CD14-positive monocyte (primary cell): ENCODE measurements at regions of chr4 and their contacts with region 1.

Region 1: DNA sequence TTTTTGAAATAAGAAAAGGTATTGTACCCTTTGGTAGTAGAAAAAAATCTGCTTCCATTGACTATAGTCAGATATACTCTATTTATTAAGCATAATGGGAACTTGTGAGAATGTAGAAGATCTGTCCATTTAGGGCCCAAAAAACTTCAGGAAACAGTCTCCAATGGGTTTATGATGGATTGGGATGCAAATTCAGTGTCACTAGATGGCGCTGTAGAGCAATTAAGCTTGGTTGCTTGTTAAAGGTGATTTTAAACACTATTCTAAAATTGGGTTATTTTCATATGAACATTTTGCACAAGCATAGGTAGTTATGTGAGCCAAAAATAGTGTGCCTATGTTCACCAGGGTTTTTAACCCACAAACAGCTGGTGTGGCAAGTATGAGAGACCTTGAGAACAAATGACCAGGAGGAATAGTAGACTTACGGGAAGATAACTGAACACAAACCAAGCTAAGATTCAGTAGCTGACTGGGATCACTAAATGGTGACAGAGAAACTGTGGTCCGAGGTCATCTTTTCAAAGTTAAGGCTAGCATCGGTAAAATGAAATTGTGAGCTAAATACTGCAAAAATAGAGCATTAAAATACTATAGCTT is 80.3 kb upstream of the LSM6 start:
- DNase-seq: peak; percentile 42 to 75 (median 64)
- H3K4me3 ChIP-seq: no peak overlapping the region
- H3K4me3 Mint-ChIP-seq: no peak overlapping the region
- H3K27ac ChIP-seq: no peak overlapping the region
- H3K27ac Mint-ChIP-seq: no peak overlapping the region
- H3K4me1 ChIP-seq: no peaks in the 10 kb centered on the region
- H3K4me1 Mint-ChIP-seq: peaks cover 12% of the 10 kb centered on the region
- H3K27me3 ChIP-seq: peaks cover 0 to 5% of the 10 kb centered on the region in 2 donors
- H3K27me3 Mint-ChIP-seq: peaks cover 3 to 10% (median 9%) of the 10 kb centered on the region in 3 donors
- CTCF ChIP-seq: peak; percentile 96

Region 2: DNA sequence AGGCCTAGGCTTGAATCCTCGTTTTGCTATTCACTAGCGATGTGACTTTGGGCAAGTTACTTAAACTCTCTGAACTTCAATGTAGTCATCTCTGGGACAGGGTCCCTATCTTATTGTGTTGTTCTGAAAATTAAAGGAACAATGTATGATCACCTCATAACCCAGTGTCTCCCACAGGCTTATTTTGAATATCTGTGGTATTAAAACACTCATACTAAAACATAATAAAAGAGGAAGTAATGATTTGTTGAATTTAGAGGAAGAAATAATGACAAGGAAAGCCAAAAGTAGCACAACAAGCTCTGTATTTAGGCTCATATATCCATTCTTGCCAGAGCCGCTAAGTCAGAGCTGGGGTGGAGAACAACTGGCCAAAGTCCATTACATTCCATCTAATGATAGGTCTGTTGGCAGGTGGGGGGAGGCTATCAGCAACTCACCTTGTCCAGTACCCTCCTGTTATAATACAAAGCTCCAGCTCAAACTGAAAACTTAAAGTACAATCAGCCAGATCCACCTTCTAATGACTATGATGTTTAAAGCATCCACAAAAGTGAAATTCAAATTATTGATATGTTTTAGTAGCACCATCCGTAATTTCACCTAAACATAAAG is 15.8 kb after region 1 on chr4:
- intact Hi-C with region 1: loop called in 1 of 2 experiments (anchors 2 kb)
- DNase-seq: peak; percentile 41 to 48 (median 47)
- H3K4me3 ChIP-seq: peak overlapping the region in 1 of 3 experiments; percentile 21
- H3K4me3 Mint-ChIP-seq: peak overlapping the region in 1 of 2 donors; percentile 42
- H3K27ac ChIP-seq: peak overlapping the region; percentile 74 to 81
- H3K27ac Mint-ChIP-seq: peak overlapping the region; percentile 83 to 95 (median 91)
- H3K4me1 ChIP-seq: peaks cover 71 to 77% of the 10 kb centered on the region in 2 donors
- H3K4me1 Mint-ChIP-seq: peaks cover 71% of the 10 kb centered on the region
- H3K27me3 ChIP-seq: no peaks in the 10 kb centered on the region
- H3K27me3 Mint-ChIP-seq: peaks cover 0 to 3% (median 1%) of the 10 kb centered on the region in 3 donors
- CTCF ChIP-seq: no peak